Activated T-helper 1 cell treated with anti-CD3 and anti-CD28 coated beads, Interleukin-12 subunit alpha, Interleukin-12 subunit beta, Interleukin-2, Interleukin-4 antibody, amounts not matched to agents 30 ng/mL and 10 ng/mL and 1 ng/mL, durations not matched to agents 14 hours and 24 hours and 36 hours (primary cell): ENCODE measurements at regions of chr18 and their contacts with region 1.

Region 1: GRCh38 chr18:3305354-3305762 is 43.4 kb downstream of the MYL12B start:
- DNase-seq: peak; percentile 44
- H3K4me3 Mint-ChIP-seq: peak overlapping the region; percentile 3
- H3K27ac Mint-ChIP-seq: peak overlapping the region; percentile 94
- H3K4me1 Mint-ChIP-seq: peaks cover 23% of the 10 kb centered on the region
- H3K27me3 Mint-ChIP-seq: peaks cover 17% of the 10 kb centered on the region

Region 2: GRCh38 chr18:3269241-3269913 is 36.0 kb before region 1 on chr18:
- intact Hi-C with region 1: no loop called
- DNase-seq: no peak
- H3K4me3 Mint-ChIP-seq: no peak overlapping the region
- H3K27ac Mint-ChIP-seq: no peak overlapping the region
- H3K4me1 Mint-ChIP-seq: peaks cover 82% of the 10 kb centered on the region
- H3K27me3 Mint-ChIP-seq: no peaks in the 10 kb centered on the region

Region 3: DNA sequence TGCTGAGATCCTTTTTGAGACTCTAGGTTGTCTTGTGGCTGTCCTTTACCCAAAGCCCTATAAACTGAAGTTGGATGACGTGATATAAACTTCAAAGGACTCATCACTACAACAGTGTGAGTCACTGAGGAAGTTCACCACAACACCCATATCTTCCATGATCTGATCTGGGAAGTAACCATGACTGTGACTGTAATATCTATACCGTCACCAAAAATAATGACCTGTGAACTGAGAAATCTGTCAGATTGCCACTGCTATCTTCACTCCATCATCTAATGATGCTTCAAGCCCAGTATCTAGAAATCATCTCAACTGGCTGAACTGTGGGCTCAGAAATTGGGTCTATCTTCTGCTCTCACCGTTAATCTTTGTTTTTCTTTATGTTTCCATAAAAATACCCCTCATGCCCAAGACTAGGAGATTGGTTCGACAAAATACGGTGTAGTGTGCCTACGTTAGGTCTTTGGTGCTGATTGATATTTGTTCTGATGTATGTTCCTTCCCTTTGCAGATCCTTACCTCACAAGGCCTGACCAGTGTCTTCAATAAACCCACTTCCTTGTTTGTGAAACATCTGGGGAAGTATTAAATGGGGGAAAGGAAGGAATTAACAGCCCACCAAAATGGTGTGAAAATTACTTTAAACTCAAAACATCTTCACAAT is 34.8 kb after region 1 on chr18:
- intact Hi-C with region 1: loop called (anchors 1 kb)
- DNase-seq: no peak
- H3K4me3 Mint-ChIP-seq: no peak overlapping the region
- H3K27ac Mint-ChIP-seq: peak overlapping the region; percentile 42
- H3K4me1 Mint-ChIP-seq: peaks cover 14% of the 10 kb centered on the region
- H3K27me3 Mint-ChIP-seq: no peaks in the 10 kb centered on the region

Region 4: DNA sequence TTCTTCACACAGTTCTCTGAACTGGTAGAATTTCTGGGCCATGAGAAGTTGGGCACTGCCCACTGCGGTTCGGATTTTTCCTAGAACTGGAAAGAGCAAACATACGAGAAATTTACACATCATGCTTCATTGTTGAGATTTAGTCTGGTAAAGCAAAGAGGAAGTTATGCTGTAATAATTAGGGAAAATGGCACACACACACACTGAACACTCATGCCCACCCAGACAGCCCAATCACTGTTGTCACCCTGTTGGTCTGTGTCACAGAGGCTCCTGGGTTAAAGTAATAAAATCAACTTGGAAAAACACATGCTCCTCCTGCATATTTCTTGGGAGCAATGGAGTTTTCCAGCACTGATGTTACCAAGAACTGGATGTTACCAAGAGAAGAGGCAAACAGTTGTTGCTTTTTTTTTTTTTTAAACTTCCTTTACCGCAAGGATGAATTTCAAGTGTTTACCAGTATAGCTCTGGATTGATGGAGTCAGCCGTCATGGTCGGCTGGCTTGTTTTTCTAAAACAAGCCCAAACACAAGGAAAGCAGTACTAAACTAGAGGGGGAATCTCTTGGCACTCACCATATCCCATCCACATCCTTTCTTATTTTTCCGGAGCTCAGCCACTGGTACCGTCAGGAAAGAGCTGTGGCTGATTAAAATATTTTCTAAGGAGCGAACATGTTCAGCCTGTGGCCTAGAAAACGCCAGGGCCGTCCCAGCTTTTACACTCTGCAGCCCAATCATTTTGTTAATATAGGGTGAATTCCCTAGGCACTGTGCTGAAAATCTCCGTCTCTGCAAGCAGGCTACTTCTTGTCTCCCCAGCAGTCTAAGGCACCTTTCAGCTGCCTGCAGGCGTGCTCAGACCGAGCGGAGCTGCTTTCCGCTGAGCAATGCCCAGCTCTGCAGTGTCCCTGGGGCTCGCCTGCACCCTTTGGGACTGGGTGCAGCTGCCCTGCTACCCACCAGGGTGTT is 203.5 kb after region 1 on chr18:
- intact Hi-C with region 1: no loop called
- DNase-seq: no peak
- H3K4me3 Mint-ChIP-seq: no peak overlapping the region
- H3K27ac Mint-ChIP-seq: no peak overlapping the region
- H3K4me1 Mint-ChIP-seq: no peaks in the 10 kb centered on the region
- H3K27me3 Mint-ChIP-seq: peaks cover 10% of the 10 kb centered on the region